Right cardiac atrium (tissue), 5 donors: ENCODE measurements at regions of chr1 and their contacts with region 1.

Region 1: GRCh38 chr1:115138968-115139367 is 49.7 kb upstream of the TSPAN2 start:
- DNase-seq: peak; percentile 92 to 97 (median 94)
- ATAC-seq: peak; percentile 92 to 95
- H3K4me3 ChIP-seq: no peak overlapping the region
- H3K27ac ChIP-seq: no peak overlapping the region
- H3K4me1 ChIP-seq: peaks cover 12% of the 10 kb centered on the region
- H3K27me3 ChIP-seq: no peaks in the 10 kb centered on the region

Region 2: GRCh38 chr1:114868766-114869165 is 270.2 kb before region 1 on chr1:
- intact Hi-C with region 1: no loop called
- DNase-seq: no peak
- ATAC-seq: no peak
- H3K4me3 ChIP-seq: no peak overlapping the region
- H3K27ac ChIP-seq: no peak overlapping the region
- H3K4me1 ChIP-seq: no peaks in the 10 kb centered on the region
- H3K27me3 ChIP-seq: no peaks in the 10 kb centered on the region

Region 3: GRCh38 chr1:114979278-114979891 is 159.6 kb before region 1 on chr1:
- intact Hi-C with region 1: no loop called
- DNase-seq: peak; percentile 36 to 67 (median 39)
- ATAC-seq: no peak
- H3K4me3 ChIP-seq: no peak overlapping the region
- H3K27ac ChIP-seq: no peak overlapping the region
- H3K4me1 ChIP-seq: no peaks in the 10 kb centered on the region
- H3K27me3 ChIP-seq: no peaks in the 10 kb centered on the region

Region 4: GRCh38 chr1:115210302-115210711 is 71.3 kb after region 1 on chr1:
- intact Hi-C with region 1: loop called in 1 of 4 experiments (anchors 10 kb)
- DNase-seq: no peak
- ATAC-seq: no peak
- H3K4me3 ChIP-seq: no peak overlapping the region
- H3K27ac ChIP-seq: no peak overlapping the region
- H3K4me1 ChIP-seq: peaks cover 2% of the 10 kb centered on the region
- H3K27me3 ChIP-seq: no peaks in the 10 kb centered on the region

Region 5: DNA sequence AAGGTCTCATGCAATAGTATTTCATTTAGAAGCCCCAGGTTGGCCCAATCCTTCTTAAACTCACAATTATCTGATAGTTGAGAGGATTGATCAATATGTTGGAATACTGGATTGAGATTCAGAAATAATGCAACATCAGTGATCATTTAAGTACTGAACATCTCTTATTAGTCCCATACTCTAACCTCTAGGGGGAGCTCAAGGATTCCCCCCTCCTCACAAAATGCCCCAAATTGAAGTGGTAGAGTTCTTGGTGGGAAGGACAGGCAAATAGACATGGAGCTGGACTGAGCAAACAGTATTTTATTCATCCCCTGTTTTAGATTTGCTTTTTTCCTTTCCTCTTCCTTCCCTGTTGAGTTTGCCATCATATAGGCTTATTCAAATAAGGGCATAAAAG is 136.2 kb after region 1 on chr1:
- intact Hi-C with region 1: loop called in 1 of 4 experiments (anchors 10 kb)
- DNase-seq: no peak
- ATAC-seq: no peak
- H3K4me3 ChIP-seq: no peak overlapping the region
- H3K27ac ChIP-seq: peak overlapping the region; percentile 13
- H3K4me1 ChIP-seq: no peaks in the 10 kb centered on the region
- H3K27me3 ChIP-seq: no peaks in the 10 kb centered on the region

Region 6: DNA sequence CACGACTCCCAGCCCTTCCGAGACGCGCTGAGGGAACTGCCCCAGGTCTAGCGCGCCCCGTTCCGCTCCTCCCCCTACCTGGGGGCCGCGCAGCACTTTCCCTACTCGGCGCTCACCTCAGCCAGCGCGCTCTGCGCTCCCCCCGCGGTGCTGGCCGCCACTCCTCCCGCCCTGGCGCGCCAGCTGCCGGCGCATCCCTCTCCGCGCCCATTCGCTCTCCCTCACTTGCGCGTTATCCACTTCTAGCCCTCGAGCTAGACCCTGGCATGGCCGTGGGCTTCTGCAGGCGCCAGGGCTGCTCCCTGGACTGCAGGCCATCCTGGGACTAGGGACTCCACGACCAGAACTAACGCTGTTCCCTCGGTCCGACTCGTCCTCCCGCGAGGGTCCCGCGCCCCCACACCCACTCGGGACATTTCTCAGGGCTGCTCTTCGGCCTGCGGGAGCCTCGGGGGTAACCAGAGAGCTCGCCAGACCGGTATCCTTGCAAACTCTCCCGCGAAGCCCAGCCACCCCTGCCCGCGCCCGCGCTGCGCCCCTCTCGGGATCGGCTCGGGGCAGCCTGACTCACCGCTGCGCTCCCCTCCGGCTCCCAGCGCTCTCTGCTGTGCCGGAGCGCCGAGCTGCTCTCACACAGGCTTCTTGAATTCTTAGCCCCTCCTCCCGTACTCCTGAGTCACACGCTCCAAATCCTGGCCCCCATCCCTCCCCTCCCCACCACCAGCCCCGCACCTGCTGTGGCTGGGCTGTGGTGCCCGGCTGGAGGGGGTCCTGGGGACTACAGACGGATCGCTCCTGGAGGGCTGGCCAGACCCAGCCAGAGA is 198.9 kb after region 1 on chr1 and contains the start of gene NGF:
- intact Hi-C with region 1: loop called in 1 of 4 experiments (anchors 5 kb)
- DNase-seq: peak; percentile 72 to 86 (median 85)
- ATAC-seq: peak; percentile 82 to 93
- H3K4me3 ChIP-seq: peak within 1 kb of the TSS; percentile 64
- H3K27ac ChIP-seq: peak within 1 kb of the TSS; percentile 44
- H3K4me1 ChIP-seq: peaks cover 2% of the 10 kb centered on the region
- H3K27me3 ChIP-seq: no peaks in the 10 kb centered on the region
- total RNA-seq, gene NGF: 3.3 to 7.4 (median 5.6) TPM

Region 7: DNA sequence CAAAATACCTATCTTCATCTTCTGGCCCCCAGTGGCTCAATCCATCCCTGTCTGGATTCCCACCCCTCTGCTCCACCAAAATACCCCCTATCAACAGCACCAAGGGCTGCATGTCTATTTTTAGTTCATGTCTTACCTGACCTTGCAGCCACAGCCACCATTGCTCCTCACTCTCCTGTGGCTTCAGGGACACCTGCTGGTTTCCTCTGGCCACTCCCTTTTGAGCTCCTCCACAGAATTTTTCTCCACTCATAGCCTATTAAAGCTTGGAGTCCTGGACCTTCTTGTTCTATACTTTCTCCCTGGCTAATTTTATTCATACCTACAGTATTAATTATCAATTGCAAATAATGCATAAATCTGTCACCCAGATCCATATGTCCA is 324.4 kb after region 1 on chr1:
- intact Hi-C with region 1: loop called (anchors 2 to 5 kb)
- DNase-seq: no peak
- ATAC-seq: no peak
- H3K4me3 ChIP-seq: no peak overlapping the region
- H3K27ac ChIP-seq: no peak overlapping the region
- H3K4me1 ChIP-seq: no peaks in the 10 kb centered on the region
- H3K27me3 ChIP-seq: no peaks in the 10 kb centered on the region

Region 8: GRCh38 chr1:115469703-115470476 is 330.9 kb after region 1 on chr1:
- intact Hi-C with region 1: loop called in 3 of 4 experiments (anchors 5 kb)
- DNase-seq: peak in 2 of 3 donors; percentile 64 to 74
- ATAC-seq: peak; percentile 53 to 73
- H3K4me3 ChIP-seq: no peak overlapping the region
- H3K27ac ChIP-seq: no peak overlapping the region
- H3K4me1 ChIP-seq: no peaks in the 10 kb centered on the region
- H3K27me3 ChIP-seq: no peaks in the 10 kb centered on the region

Region 9: DNA sequence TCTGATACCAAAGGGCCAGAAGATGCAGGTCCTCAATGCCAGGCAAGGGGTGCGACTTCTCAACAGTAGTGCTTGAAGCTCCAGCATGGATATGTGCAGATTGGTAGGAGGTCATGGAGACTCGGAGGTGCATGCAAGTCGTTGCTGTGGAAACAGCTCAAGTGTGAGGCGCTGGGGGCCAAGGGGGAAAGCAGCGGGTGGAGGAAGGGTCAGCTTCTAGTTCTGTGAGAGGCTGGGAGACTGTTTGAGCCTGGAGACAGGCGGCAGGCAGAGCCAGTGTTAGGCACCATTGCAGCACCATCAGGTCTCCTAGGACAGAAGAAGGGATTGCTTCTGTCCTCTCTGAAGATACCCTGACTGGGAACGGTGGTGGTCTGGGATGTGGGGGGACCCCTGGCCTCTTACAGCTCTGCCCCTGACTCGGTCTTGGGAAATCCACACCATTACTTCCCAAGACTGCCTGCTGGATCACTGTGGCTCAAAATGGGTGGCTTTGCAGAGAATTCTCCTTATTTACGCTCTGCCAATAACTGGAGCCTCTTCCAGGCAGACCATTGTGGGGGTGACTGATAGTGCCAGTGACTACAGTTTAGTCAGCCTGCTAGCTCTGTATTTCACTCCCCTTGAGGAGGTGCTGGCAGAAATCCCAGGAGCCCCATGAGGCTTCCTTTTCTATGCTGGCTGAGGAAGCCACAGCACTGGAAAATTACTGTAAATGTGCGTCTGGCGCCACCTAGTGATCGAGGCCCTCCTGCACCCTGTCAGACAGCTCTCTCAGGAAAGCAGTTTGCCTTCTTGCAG is 456.5 kb after region 1 on chr1:
- intact Hi-C with region 1: loop called (anchors 5 kb)
- DNase-seq: peak; percentile 94 to 97 (median 95)
- ATAC-seq: peak; percentile 94 to 97
- H3K4me3 ChIP-seq: no peak overlapping the region
- H3K27ac ChIP-seq: no peak overlapping the region
- H3K4me1 ChIP-seq: peaks cover 5% of the 10 kb centered on the region
- H3K27me3 ChIP-seq: no peaks in the 10 kb centered on the region